Heart right ventricle (tissue), 16 donors: ENCODE measurements at regions of chr20 and their contacts with region 1.

Region 1: DNA sequence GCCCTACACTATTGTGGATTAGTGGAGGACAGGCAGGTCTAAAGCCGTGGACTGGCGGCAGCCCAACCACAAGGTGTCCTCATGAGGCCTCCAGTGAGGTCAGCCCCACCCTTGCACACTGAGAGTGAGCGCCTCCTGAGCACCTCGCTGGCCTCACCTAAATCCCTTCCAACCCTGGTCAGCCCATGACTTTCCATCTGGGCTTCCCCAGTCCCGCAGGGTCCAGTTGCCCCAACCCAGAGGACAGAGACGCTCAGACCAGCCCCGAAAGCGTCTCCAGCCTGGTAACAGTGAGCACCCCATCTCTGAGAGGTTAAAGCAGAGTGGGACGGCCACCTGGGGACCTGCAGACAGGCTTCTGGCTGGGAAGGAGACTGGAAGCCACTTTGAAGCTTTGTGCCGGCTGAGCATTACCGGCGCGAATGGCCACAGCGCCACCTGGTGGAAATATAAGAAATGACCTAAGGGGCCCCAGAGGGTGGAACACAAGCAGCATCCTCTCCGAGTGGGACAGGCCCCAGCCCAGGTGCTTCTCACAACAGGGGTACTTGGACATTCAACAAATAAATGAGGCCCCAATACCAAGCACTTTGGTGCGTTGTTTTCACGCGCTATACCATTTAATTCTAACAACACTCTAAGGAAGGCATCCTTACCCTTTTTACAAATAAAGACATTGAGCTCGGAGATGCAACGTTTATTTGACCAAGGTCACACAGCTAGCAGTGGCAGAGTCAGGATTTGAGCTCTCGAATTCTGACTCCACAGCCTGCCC is 65.7 kb upstream of the TOP1 start:
- DNase-seq: peak; percentile 62 to 65
- ATAC-seq: peak; percentile 77 to 89 (median 84)
- H3K4me3 ChIP-seq: no peak overlapping the region
- H3K27ac ChIP-seq: no peak overlapping the region
- H3K4me1 ChIP-seq: peaks cover 0 to 15% (median 0%) of the 10 kb centered on the region in 9 donors
- H3K27me3 ChIP-seq: peaks cover 0 to 4% (median 0%) of the 10 kb centered on the region in 7 donors
- CTCF ChIP-seq: peak; percentile 82 to 96 (median 92)

Region 2: DNA sequence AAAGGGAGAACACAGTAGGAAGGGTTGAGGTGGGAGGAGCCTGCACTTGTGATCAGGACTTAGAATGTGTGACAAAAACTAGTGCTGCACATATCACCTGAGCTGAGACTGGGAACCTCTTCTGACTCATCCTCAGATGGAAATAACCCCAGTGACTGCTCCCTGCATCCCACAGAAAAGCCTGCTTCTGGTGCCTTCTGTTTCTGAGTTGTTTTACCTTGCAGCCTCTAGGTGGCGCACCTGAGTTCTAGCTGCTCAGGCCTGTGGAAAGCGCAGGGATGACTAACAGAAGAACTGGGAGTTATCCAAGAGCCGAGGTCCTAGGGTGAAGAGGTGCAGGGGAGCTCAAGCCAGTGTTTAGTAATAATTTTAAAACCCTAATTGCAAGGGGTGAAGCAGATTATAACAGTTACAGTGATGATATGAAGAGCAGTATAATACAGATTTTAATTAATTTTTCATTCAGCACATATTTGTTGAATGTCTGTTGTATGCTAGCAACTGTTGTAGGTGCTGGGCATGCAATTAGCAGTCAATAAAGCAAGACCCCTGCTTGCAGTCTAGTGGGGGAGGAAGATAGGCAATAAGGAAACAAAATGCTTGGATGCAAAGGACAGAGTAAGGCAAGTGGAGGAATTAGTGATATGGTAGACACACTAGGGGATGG is 1698.3 kb before region 1 on chr20:
- intact Hi-C with region 1: loop called in 6 of 10 experiments (anchors 5 to 10 kb)
- DNase-seq: peak; percentile 41 to 50
- ATAC-seq: peak; percentile 28 to 79 (median 54)
- H3K4me3 ChIP-seq: no peak overlapping the region
- H3K27ac ChIP-seq: no peak overlapping the region
- H3K4me1 ChIP-seq: peaks cover 0 to 24% (median 0%) of the 10 kb centered on the region in 9 donors
- H3K27me3 ChIP-seq: peaks cover 0 to 8% (median 0%) of the 10 kb centered on the region in 7 donors
- CTCF ChIP-seq: peak; percentile 58 to 92 (median 86)

Region 3: GRCh38 chr20:39885975-39886649 is 1076.8 kb before region 1 on chr20:
- intact Hi-C with region 1: loop called in 7 of 10 experiments (anchors 5 to 10 kb)
- DNase-seq: peak; percentile 51 to 69
- ATAC-seq: peak; percentile 61 to 88 (median 82)
- H3K4me3 ChIP-seq: no peak overlapping the region
- H3K27ac ChIP-seq: peak overlapping the region in 2 of 10 donors; percentile 10 to 50
- H3K4me1 ChIP-seq: peaks cover 0 to 11% (median 0%) of the 10 kb centered on the region in 9 donors
- H3K27me3 ChIP-seq: no peaks in the 10 kb centered on the region
- CTCF ChIP-seq: peak; percentile 24 to 71 (median 65)

Region 4: GRCh38 chr20:41095110-41095969 is 132.4 kb after region 1 on chr20:
- intact Hi-C with region 1: loop called in 7 of 10 experiments (anchors 1 to 5 kb)
- DNase-seq: peak; percentile 40 to 54
- ATAC-seq: peak in 7 of 8 donors; percentile 58 to 83 (median 70)
- H3K4me3 ChIP-seq: no peak overlapping the region
- H3K27ac ChIP-seq: no peak overlapping the region
- H3K4me1 ChIP-seq: peaks cover 0 to 15% (median 0%) of the 10 kb centered on the region in 9 donors
- H3K27me3 ChIP-seq: no peaks in the 10 kb centered on the region
- CTCF ChIP-seq: peak; percentile 69 to 92 (median 87)